ENCODE measurements at regions of chr2 and their contacts with region 1.

Region 1: GRCh38 chr2:207473049-207473930 is 56.5 kb upstream of the CREB1 start:
- DNase-seq: peak; percentile 47
- H3K4me3 Mint-ChIP-seq: no peak overlapping the region
- H3K27ac Mint-ChIP-seq: no peak overlapping the region
- H3K4me1 Mint-ChIP-seq: peaks cover 26% of the 10 kb centered on the region
- H3K27me3 Mint-ChIP-seq: no peaks in the 10 kb centered on the region

Region 2: DNA sequence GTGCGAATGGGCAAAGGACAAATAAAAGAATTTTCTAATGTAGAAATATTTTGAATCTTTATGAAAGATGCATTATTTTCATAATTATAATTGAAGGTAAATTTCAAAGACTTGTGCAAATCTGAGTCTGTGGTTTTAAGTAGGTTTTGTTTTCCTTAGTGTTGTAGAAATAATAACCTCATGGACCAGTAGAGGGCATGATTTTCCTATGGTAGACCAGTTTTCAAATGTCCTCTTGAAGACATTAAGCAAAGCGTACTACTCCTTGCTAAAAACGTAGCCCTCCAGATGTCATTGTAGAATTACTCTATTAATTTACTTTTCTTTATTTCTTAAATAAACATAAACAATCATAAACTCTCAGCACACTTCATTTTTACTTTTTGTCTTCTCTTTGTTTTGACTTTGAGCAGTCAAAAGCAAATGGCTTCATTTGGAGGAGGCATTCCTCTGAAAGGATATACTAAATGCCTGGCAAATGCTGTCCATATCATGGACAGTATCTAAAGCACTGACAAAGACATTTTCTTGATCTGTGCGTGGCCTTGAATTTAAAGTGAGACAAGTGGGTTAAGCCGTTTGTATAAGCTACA is 916.8 kb before region 1 on chr2:
- intact Hi-C with region 1: loop called (anchors 1 kb)
- DNase-seq: no peak
- H3K4me3 Mint-ChIP-seq: no peak overlapping the region
- H3K27ac Mint-ChIP-seq: no peak overlapping the region
- H3K4me1 Mint-ChIP-seq: peaks cover 11% of the 10 kb centered on the region
- H3K27me3 Mint-ChIP-seq: peaks cover 26% of the 10 kb centered on the region

Region 3: DNA sequence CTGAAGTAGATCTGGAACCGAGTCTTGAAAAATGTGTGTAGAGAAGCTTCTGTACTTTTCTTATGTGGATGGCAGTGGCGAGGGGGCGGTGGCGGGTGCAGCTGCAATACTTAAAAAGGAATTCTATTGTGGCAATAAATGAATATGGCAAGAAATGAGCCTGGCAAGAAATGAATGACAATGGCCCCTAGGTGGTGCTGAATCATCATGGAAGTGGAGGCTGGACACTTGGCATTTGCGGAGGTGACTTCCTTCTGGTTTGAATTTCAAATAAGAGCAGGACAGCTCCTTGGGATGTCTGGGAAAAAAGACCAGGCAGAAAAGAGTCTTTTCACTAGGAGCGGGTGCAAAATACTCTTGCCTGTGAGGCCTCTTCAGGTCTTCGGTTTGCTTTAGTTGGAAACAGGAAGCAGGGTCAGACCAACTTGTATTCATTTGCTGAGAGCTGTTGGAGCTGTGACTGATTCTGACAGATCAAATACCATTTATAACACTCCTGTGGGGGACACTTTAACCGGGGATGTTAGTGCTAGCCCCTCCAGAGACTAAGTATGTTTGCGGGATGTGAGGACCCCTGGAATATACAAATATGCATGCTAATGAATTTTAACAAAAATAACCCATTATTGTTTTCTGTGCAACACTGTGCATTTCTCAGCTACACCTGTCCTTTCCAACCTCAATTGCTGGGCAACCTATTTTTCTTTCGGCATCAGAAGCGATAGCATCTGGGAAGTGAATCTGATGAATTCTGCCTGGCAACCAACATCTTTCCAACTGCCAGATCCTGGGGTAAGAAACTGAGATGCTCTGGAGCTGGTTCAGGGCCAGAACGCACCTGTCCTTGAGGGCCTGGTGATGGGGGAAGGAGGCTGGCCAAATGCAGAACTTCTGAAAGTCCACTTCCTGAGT is 672.5 kb before region 1 on chr2:
- intact Hi-C with region 1: loop called (anchors 1 kb)
- DNase-seq: peak; percentile 28
- H3K4me3 Mint-ChIP-seq: peak overlapping the region; percentile 49
- H3K27ac Mint-ChIP-seq: peak overlapping the region; percentile 61
- H3K4me1 Mint-ChIP-seq: peaks cover 20% of the 10 kb centered on the region
- H3K27me3 Mint-ChIP-seq: no peaks in the 10 kb centered on the region

Region 4: GRCh38 chr2:206955253-206955652 is 518.0 kb before region 1 on chr2:
- intact Hi-C with region 1: no loop called
- DNase-seq: no peak
- H3K4me3 Mint-ChIP-seq: no peak overlapping the region
- H3K27ac Mint-ChIP-seq: no peak overlapping the region
- H3K4me1 Mint-ChIP-seq: no peaks in the 10 kb centered on the region
- H3K27me3 Mint-ChIP-seq: peaks cover 2% of the 10 kb centered on the region

Region 5: DNA sequence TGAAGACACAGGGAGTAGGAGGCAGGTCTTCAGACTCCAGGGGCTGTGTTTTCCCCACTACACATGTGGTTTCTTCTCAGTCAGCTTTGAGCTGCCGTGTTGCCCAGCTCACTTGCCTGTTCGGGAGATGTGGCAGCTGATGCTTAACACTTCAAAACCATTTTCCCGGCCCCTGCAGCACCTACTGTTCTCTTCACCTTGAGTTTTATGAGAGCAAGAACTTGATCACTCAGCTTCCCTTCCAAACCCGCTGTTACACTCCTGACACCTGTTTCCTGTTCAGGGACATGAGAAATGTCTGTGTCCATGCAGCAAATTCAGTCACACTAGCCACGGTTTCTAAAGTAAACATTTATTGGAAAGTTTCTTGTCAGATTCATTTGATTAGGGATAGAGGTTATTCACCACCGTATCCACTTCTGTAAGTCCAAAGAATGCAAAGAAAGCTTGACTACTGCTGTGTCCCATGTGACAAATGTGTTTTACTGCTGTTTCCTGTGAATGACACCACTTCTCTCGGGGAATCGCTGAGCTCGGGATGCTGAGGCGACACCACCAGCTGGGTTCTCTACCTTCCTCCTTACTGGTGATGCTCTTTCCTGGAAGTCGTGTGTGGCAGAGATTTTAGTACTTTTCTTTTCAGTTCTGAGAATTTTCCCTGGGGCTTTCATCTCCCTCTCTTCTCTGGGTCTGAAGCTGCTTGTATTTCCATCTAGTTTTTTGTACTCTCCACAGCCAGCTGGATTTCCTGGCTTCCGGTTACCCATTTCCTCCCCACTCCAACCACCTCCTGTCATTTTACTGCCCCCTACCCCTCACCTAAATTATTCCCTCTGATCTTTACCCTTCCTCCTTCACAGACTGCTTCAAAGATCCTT is 399.2 kb before region 1 on chr2:
- intact Hi-C with region 1: loop called (anchors 1 kb)
- DNase-seq: peak; percentile 39
- H3K4me3 Mint-ChIP-seq: peak overlapping the region; percentile 71
- H3K27ac Mint-ChIP-seq: peak overlapping the region; percentile 79
- H3K4me1 Mint-ChIP-seq: peaks cover 46% of the 10 kb centered on the region
- H3K27me3 Mint-ChIP-seq: no peaks in the 10 kb centered on the region

Region 6: GRCh38 chr2:207238831-207239701 is 234.2 kb before region 1 on chr2:
- intact Hi-C with region 1: loop called (anchors 5 kb)
- DNase-seq: no peak
- H3K4me3 Mint-ChIP-seq: peak overlapping the region; percentile 50
- H3K27ac Mint-ChIP-seq: peak overlapping the region; percentile 73
- H3K4me1 Mint-ChIP-seq: peaks cover 19% of the 10 kb centered on the region
- H3K27me3 Mint-ChIP-seq: no peaks in the 10 kb centered on the region

Region 7: DNA sequence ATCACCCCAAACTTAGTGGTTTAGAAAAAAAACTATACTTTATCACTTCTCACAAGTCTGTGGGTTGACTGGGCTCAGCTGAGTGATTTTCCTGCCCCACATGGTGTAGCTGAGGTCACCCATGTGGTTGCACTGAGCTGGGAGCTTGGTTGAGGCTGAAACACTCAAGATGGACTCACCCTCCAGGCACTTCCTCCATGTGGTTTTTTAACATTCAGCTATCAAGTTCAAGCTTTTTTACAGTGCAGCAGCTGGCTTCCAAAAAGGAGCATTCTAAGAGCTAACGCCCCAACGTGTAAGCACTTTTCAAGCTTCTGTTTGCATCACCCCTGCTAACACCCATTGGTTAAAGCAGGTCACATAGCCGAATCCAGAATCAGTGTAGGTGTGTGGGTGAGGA is 49.4 kb before region 1 on chr2:
- intact Hi-C with region 1: loop called (anchors 5 kb)
- DNase-seq: peak; percentile 49
- H3K4me3 Mint-ChIP-seq: no peak overlapping the region
- H3K27ac Mint-ChIP-seq: peak overlapping the region; percentile 5
- H3K4me1 Mint-ChIP-seq: peaks cover 22% of the 10 kb centered on the region
- H3K27me3 Mint-ChIP-seq: peaks cover 8% of the 10 kb centered on the region

Region 8: DNA sequence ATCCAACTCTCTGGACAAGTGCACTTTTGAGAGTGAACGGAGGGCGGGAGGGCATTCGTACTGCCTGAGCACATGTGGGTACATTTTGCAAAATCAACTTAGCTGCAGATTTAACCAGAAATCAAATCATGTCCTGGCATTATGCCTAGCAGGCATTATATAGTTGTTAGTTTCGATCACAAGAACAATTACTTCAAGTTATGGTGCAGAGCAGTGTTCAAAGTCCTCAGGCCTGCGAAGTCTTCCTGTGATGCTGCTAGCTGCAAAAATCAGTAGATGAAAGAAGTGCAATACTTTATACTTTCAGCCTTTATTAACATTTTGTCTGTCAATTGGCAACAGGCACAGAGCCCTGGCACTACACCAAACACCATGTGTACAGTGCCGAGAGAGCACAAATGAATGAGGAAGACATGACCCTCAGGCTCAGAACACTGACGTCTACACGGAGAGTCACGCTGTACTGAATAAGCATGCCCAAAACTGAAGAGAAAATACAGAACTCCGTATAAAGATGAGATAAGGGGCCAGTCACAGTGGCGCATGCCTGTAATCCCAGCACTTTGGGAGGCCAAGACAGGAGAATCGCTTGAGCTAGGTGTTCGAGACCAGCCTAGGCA is 35.7 kb before region 1 on chr2:
- intact Hi-C with region 1: no loop called
- DNase-seq: no peak
- H3K4me3 Mint-ChIP-seq: no peak overlapping the region
- H3K27ac Mint-ChIP-seq: no peak overlapping the region
- H3K4me1 Mint-ChIP-seq: no peaks in the 10 kb centered on the region
- H3K27me3 Mint-ChIP-seq: no peaks in the 10 kb centered on the region